ENCODE measurements at regions of chr22 and their contacts with region 1.

Region 1: GRCh38 chr22:29427176-29427760 is 11.1 kb upstream of the RFPL1 start:
- DNase-seq: no peak
- ATAC-seq: no peak
- H3K4me3 ChIP-seq: no peak overlapping the region
- H3K4me3 Mint-ChIP-seq: no peak overlapping the region
- H3K27ac ChIP-seq: no peak overlapping the region
- H3K27ac Mint-ChIP-seq: no peak overlapping the region
- H3K4me1 ChIP-seq: no peaks in the 10 kb centered on the region
- H3K4me1 Mint-ChIP-seq: no peaks in the 10 kb centered on the region
- H3K27me3 ChIP-seq: no peaks in the 10 kb centered on the region
- H3K27me3 Mint-ChIP-seq: peaks cover 14% of the 10 kb centered on the region
- CTCF ChIP-seq: no peak

Region 2: GRCh38 chr22:29369460-29369859 is 57.8 kb before region 1 on chr22:
- CTCF ChIA-PET with region 1: no interaction called
- POLR2A ChIA-PET with region 1: no interaction called
- intact Hi-C with region 1: loop called in 1 of 2 experiments (anchors 2 kb)
- DNase-seq: peak in 2 of 14 experiments; percentile 31 to 45
- ATAC-seq: no peak
- H3K4me3 ChIP-seq: no peak overlapping the region
- H3K4me3 Mint-ChIP-seq: no peak overlapping the region
- H3K27ac ChIP-seq: no peak overlapping the region
- H3K27ac Mint-ChIP-seq: no peak overlapping the region
- H3K4me1 ChIP-seq: no peaks in the 10 kb centered on the region
- H3K4me1 Mint-ChIP-seq: peaks cover 24% of the 10 kb centered on the region
- H3K27me3 ChIP-seq: no peaks in the 10 kb centered on the region
- H3K27me3 Mint-ChIP-seq: no peaks in the 10 kb centered on the region
- CTCF ChIP-seq: no peak

Region 3: GRCh38 chr22:29457730-29458129 is 30.5 kb after region 1 on chr22:
- CTCF ChIA-PET with region 1: no interaction called
- POLR2A ChIA-PET with region 1: no interaction called
- intact Hi-C with region 1: no loop called
- DNase-seq: peak in 3 of 14 experiments; percentile 26 to 38 (median 32)
- ATAC-seq: peak; percentile 57
- H3K4me3 ChIP-seq: no peak overlapping the region
- H3K4me3 Mint-ChIP-seq: no peak overlapping the region
- H3K27ac ChIP-seq: no peak overlapping the region
- H3K27ac Mint-ChIP-seq: no peak overlapping the region
- H3K4me1 ChIP-seq: no peaks in the 10 kb centered on the region
- H3K4me1 Mint-ChIP-seq: no peaks in the 10 kb centered on the region
- H3K27me3 ChIP-seq: no peaks in the 10 kb centered on the region
- H3K27me3 Mint-ChIP-seq: no peaks in the 10 kb centered on the region
- CTCF ChIP-seq: no peak